Pancreas (tissue), 10 donors: ENCODE measurements at regions of chr6 and their contacts with region 1.

Region 1: GRCh38 chr6:158060455-158061360 is 79.0 kb downstream of the SYNJ2 start:
- DNase-seq: peak; percentile 69 to 92 (median 82)
- ATAC-seq: peak; percentile 84 to 89 (median 86)
- H3K4me3 ChIP-seq: no peak overlapping the region
- H3K27ac ChIP-seq: peak overlapping the region; percentile 71 to 93 (median 86)
- H3K4me1 ChIP-seq: peaks cover 6 to 16% (median 11%) of the 10 kb centered on the region in 3 donors
- H3K27me3 ChIP-seq: no peaks in the 10 kb centered on the region
- CTCF ChIP-seq: no peak

Region 2: DNA sequence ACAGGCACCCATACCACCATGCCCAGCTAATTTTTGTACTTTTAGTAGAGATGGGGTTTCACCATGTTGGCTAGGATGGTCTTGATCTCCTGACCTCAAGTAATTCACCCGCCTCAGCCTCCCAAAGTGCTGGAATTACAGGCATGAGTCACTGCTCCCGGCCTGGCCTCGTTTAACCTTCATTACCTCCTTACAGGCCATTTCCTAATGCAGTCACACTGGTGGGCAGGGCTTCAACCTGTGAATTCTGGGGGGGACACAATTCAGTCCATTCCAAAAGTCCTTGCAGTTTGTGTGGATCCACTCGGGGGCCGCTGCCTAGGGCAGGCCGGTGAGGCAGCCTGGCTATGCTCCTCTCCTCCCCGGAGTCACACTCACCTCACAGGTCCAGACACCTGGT is 350.1 kb before region 1 on chr6:
- intact Hi-C with region 1: no loop called
- DNase-seq: no peak
- ATAC-seq: no peak
- H3K4me3 ChIP-seq: no peak overlapping the region
- H3K27ac ChIP-seq: no peak overlapping the region
- H3K4me1 ChIP-seq: no peaks in the 10 kb centered on the region
- H3K27me3 ChIP-seq: no peaks in the 10 kb centered on the region
- CTCF ChIP-seq: no peak

Region 3: DNA sequence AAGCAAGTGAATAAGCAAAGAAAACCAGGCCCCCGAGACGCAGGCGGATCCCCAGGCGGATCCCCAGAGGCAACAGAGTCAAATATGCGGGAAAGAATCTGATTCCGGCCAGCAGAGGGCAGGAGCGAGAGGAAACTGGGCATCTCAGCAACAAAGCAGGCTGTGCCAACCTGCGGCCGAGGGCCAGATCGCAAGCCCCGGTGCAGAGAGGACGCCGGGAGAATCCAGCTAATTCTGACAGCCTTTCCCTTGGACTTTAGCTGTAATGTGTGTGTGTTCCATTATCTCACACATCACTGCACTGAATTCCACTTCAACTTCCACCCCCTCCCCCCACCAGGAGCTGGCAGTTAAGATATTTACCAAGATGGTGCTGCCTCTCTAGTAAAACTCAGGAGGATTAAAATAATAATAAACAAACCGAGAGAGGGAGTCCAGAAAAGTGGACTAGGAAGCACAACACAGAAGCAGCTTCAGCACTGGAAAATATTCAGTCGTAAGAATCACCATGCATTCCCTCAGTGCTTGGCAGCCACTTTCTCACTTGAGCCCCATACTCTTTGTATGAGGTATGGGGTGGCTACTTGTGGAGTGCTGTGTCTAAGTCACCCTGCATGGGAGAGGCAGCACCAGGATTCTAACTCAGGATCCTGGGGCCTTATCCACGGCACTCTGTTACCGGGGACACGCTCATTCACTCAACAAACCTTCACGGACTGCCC is 303.8 kb before region 1 on chr6:
- intact Hi-C with region 1: loop called in 2 of 3 experiments (anchors 10 kb)
- DNase-seq: peak; percentile 77 to 91 (median 88)
- ATAC-seq: peak; percentile 91 to 98 (median 96)
- H3K4me3 ChIP-seq: no peak overlapping the region
- H3K27ac ChIP-seq: no peak overlapping the region
- H3K4me1 ChIP-seq: no peaks in the 10 kb centered on the region
- H3K27me3 ChIP-seq: no peaks in the 10 kb centered on the region
- CTCF ChIP-seq: peak; percentile 64 to 81 (median 68)

Region 4: GRCh38 chr6:157764178-157765033 is 296.3 kb before region 1 on chr6:
- intact Hi-C with region 1: loop called in 2 of 3 experiments (anchors 10 kb)
- DNase-seq: peak in 5 of 6 donors; percentile 32 to 79 (median 45)
- ATAC-seq: peak; percentile 16 to 79 (median 50)
- H3K4me3 ChIP-seq: no peak overlapping the region
- H3K27ac ChIP-seq: peak overlapping the region; percentile 39 to 82 (median 62)
- H3K4me1 ChIP-seq: peaks cover 10 to 19% (median 17%) of the 10 kb centered on the region in 3 donors
- H3K27me3 ChIP-seq: no peaks in the 10 kb centered on the region
- CTCF ChIP-seq: no peak

Region 5: GRCh38 chr6:157989541-157990289 is 71.0 kb before region 1 on chr6:
- intact Hi-C with region 1: loop called in 1 of 3 experiments (anchors 10 kb)
- DNase-seq: peak; percentile 86 to 98 (median 93)
- ATAC-seq: peak; percentile 84 to 90 (median 88)
- H3K4me3 ChIP-seq: no peak overlapping the region
- H3K27ac ChIP-seq: peak overlapping the region; percentile 31 to 74 (median 64)
- H3K4me1 ChIP-seq: peaks cover 33 to 61% (median 36%) of the 10 kb centered on the region in 3 donors
- H3K27me3 ChIP-seq: no peaks in the 10 kb centered on the region
- CTCF ChIP-seq: no peak